Dorsolateral prefrontal cortex (tissue), 120 donors: ENCODE measurements at regions of chr16 and their contacts with region 1.

Region 1: GRCh38 chr16:83967806-83968305 is at the start of gene NECAB2:
- DNase-seq: peak in 4 of 10 donors; percentile 47 to 78 (median 51)
- H3K4me3 ChIP-seq: peak within 1 kb of the TSS in 55 of 59 donors; percentile 21 to 66 (median 46)
- H3K27ac ChIP-seq: no peak within 1 kb of the TSS
- H3K27me3 ChIP-seq: no peaks in the 10 kb centered on the region
- CTCF ChIP-seq: peak; percentile 14 to 87 (median 72)
- total RNA-seq, gene NECAB2: 15.8 to 117 (median 47.0) TPM

Region 2: GRCh38 chr16:83913245-83913633 is 54.6 kb before region 1 on chr16:
- intact Hi-C with region 1: no loop called
- DNase-seq: no peak
- H3K4me3 ChIP-seq: no peak overlapping the region
- H3K27ac ChIP-seq: no peak overlapping the region
- H3K27me3 ChIP-seq: no peaks in the 10 kb centered on the region
- CTCF ChIP-seq: no peak

Region 3: GRCh38 chr16:84062734-84063640 is 95.1 kb after region 1 on chr16:
- intact Hi-C with region 1: loop called (anchors 1 to 2 kb)
- DNase-seq: peak; percentile 69 to 84 (median 82)
- H3K4me3 ChIP-seq: no peak overlapping the region
- H3K27ac ChIP-seq: peak overlapping the region in 39 of 59 donors; percentile 2 to 68 (median 27)
- H3K27me3 ChIP-seq: no peaks in the 10 kb centered on the region
- CTCF ChIP-seq: peak; percentile 78 to 98 (median 89)

Region 4: DNA sequence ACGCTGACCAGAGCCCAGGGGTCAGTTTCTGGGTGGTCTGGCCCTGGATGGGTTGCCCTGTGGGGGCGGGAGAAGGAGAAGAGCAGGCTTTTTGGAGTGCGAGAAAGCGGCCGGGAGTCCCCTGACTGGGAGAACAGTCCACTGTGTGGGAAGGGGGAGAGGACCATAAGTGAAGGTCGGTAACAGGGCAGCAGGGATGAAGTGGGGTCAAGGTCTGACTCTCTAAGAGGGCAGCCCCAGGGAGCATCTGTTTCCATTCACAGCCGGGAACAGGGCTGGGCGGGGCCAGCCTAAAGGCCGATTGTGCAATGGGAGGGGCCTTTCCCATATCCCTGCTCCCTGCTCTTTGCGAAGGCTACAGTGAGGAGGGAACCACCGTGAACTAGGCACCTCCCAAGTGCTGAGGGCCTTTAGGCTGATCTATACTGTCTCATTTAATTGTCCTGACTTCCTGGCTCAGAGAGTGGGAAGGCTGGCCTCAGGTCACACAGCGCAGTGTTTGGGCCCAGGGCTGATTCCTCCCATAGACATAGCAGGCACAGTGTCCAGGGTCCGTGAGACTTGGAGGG is 316.4 kb after region 1 on chr16:
- intact Hi-C with region 1: loop called in 1 of 2 experiments (anchors 10 kb)
- DNase-seq: no peak
- H3K4me3 ChIP-seq: no peak overlapping the region
- H3K27ac ChIP-seq: peak overlapping the region in 2 of 59 donors; percentile 19 to 39
- H3K27me3 ChIP-seq: no peaks in the 10 kb centered on the region
- CTCF ChIP-seq: no peak

Region 5: DNA sequence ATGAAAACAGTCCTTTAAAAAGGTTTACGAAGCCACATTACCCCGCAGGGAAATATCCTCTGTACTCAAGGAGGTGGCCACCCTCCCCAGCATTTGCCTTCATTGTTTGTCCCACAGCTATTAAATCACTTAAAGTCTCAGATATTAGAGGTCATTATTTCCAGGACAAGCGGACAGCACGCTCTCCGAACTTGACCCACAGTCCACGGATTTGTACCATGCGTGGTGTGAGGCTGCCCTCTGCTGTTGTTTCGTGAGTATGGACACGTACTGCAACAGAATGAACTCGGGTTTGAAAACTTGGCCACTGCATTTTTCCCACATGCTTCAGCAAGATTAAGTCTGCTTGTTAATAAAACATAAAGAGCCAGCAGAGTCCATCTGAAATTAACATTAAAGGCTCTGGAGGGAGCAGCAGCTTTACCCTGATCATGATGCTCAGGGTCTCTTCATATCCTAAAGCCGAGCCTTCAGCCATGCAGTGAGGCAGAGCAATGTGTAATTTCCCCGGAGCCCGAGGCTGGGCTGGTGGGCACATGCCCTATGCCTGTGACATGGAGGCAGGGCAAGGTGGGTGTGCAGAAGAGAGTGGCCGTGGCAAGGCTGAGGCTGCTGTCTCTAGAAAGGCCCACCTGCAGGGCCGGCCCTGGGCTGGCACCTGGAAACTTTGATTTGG is 516.9 kb after region 1 on chr16:
- intact Hi-C with region 1: loop called (anchors 2 to 10 kb)
- DNase-seq: peak; percentile 68 to 89 (median 78)
- H3K4me3 ChIP-seq: peak overlapping the region in 1 of 59 donors; percentile 32
- H3K27ac ChIP-seq: peak overlapping the region in 23 of 59 donors; percentile 5 to 72 (median 52)
- H3K27me3 ChIP-seq: no peaks in the 10 kb centered on the region
- CTCF ChIP-seq: peak; percentile 64 to 96 (median 88)